ENCODE measurements at regions of chr19 and their contacts with region 1.

Region 1: DNA sequence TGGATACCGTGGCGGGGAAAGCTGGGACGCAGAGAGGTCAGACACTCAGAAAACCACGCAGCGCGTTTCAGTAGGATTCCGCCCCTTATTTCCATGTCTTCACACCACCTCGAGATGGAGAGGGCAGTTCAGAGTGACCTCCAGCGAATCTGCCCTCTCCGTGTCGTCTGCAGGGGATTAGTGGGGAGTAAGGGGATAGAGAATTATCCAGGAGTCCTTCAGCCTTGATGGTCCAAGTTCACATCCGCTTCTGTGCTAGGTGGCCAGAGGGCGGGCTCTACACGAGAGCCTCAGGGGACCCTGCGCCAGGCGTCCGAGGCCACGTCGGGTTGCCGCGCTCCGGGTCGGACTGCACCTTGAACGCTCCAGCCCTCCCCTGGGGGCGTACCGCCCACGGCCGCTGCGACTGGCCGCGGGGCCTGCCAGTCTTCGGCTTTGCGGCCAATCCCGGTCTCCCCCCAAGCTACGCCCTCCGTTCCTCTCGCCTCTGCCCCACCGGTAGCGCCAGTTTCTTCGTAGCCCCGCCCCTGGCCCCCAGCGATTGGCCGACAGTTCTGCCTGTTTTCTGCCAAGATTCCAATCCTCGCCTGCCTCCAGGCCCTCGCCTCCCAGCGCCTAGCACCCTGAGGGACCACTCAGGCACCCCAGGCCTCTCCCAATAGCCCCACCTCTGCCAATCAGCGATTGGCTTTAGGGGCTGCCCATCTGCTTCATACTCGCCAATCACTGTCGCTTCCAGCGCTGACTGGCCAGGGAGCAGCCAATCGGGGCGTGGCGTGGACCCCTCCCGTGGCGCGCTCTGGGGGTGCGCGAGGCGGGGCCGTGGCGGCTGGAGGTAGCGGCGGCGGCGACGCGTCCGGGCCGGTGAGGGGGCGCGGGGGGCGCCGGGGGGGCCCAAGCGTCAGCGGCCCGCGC is at the start of gene SLC25A42:
- DNase-seq: peak; percentile 99
- ATAC-seq: peak; percentile 97
- H3K4me3 ChIP-seq: peak within 1 kb of the TSS; percentile 64
- H3K27ac ChIP-seq: peak within 1 kb of the TSS; percentile 13; the same call in 1 of the 2 replicates
- H3K4me1 ChIP-seq: peaks cover 13% of the 10 kb centered on the region
- H3K27me3 ChIP-seq: no peaks in the 10 kb centered on the region
- CTCF ChIP-seq: no peak
- POLR2A ChIP-seq: no peak
- RAD21 ChIP-seq: no peak
- total RNA-seq, gene SLC25A42: 1.9 and 2.0 TPM in 2 replicates

Region 2: DNA sequence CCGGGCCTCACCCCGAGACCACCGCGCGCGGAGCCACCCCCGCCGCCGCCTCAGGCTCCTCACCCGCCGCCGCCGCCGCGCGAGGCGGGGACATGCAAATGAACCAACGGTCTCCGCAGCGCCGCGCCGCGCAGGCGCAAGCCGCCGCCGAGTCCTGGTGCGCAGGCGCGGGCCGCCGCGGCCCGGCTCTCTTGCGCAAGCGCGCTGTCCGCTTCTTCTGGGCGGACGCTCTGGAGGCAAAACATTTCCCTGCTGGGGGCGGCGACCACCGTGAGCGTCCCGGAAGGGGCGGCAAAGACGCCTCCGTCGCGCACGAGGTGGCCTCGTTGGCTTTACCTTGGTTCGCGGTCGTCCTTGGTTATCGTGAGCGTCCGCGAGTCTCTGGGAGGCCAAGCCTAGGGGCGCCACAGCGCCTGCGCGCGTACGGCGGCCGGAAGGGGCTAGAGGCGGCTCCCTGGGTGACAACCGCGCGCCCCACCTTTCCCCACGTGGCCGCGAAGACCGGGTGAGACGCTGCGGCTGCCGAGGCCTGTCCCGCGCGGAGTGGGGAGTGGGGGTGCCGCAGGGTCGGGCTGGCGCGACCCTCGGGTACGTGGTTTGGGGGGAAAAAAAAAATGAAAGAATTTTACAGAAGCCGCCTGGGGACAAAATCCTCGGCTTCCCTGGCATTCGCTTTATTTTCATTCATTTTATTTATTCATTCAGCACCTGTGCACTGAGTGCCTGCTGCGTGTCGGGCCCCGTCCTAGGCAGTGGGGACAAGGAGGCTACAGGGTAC is 29.8 kb before region 1 on chr19 and contains the starts of genes ARMC6 and SUGP2:
- CTCF ChIA-PET with region 1: no interaction called
- POLR2A ChIA-PET with region 1: no interaction called
- dilution Hi-C with region 1: no loop called
- in situ Hi-C with region 1: no loop called
- intact Hi-C with region 1: no loop called
- DNase-seq: peak; percentile 84
- ATAC-seq: peak; percentile 81
- H3K4me3 ChIP-seq: peak within 1 kb of the TSS; percentile 70
- H3K27ac ChIP-seq: peak within 1 kb of the TSS; percentile 94
- H3K4me1 ChIP-seq: peaks cover 6% of the 10 kb centered on the region
- H3K27me3 ChIP-seq: no peaks in the 10 kb centered on the region
- CTCF ChIP-seq: no peak
- POLR2A ChIP-seq: peak; percentile 81
- RAD21 ChIP-seq: no peak
- total RNA-seq, gene ARMC6: 46.7 and 52.7 TPM in 2 replicates
- total RNA-seq, gene SUGP2: 23.3 and 25.8 TPM in 2 replicates

Region 3: GRCh38 chr19:19138169-19138981 is 74.9 kb after region 1 on chr19 and contains the start of gene TMEM161A:
- CTCF ChIA-PET with region 1: no interaction called
- POLR2A ChIA-PET with region 1: no interaction called
- dilution Hi-C with region 1: no loop called
- in situ Hi-C with region 1: no loop called
- intact Hi-C with region 1: loop called (anchors 2 kb)
- DNase-seq: peak; percentile 99
- ATAC-seq: peak; percentile 99
- H3K4me3 ChIP-seq: peak within 1 kb of the TSS; percentile 94
- H3K27ac ChIP-seq: peak within 1 kb of the TSS; percentile 78
- H3K4me1 ChIP-seq: peaks cover 6% of the 10 kb centered on the region; the same call in 1 of the 2 replicates
- H3K27me3 ChIP-seq: no peaks in the 10 kb centered on the region
- CTCF ChIP-seq: no peak
- POLR2A ChIP-seq: peak; percentile 57; the same call in 1 of the 2 replicates
- RAD21 ChIP-seq: no peak
- total RNA-seq, gene TMEM161A: 11.1 TPM in 2 replicates

Region 4: GRCh38 chr19:19170053-19170872 is 106.8 kb after region 1 on chr19 and contains the start of gene MEF2B:
- CTCF ChIA-PET with region 1: no interaction called
- POLR2A ChIA-PET with region 1: no interaction called
- dilution Hi-C with region 1: no loop called
- in situ Hi-C with region 1: no loop called
- intact Hi-C with region 1: loop called (anchors 10 kb)
- DNase-seq: peak; percentile 30
- ATAC-seq: peak; percentile 75
- H3K4me3 ChIP-seq: no peak within 1 kb of the TSS
- H3K27ac ChIP-seq: no peak within 1 kb of the TSS
- H3K4me1 ChIP-seq: peaks cover 24% of the 10 kb centered on the region
- H3K27me3 ChIP-seq: no peaks in the 10 kb centered on the region
- CTCF ChIP-seq: no peak
- POLR2A ChIP-seq: no peak
- RAD21 ChIP-seq: no peak
- total RNA-seq, gene MEF2B: under 0.01 and 0.18 TPM in 2 replicates

Region 5: DNA sequence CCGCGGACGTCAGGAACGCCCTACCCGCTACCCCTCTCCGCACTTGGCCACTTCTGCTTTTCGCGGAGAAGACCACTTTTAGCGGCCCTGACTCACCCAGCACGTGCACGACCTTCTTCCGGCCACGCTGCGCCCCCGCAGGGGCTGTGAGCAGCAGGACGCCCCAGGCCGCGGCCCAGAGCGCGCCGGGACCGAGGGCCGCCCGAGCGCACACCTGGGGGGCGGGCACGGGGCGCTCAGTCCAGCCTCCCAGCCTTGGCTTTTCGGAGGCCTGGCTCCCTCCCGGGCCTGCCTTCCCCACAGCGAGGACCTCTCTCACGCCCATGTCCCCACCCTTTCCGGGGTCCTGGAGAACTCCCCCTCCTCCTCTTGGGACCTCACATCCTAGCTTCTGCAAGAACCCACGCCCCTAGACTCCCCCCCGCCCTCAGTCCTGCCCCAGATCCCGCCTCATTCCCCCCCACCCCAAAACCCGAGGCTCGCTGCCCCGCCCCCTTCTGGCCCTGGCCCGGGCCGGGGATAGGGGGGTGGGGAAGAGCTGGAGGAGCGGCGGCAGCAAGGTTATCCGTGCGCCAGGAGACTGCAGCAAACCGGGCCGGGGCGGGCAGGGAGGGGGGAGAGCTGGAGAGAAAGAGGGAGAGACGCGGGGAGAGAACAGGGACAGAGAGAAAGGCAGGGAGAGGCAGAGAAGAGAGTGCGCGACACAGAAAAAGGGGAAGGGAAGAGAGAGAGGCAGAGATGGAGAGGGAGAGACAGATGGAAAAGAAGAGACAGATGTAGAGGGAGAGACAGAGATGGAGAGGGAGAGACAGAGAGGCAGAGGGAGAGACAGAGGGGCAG is 198.1 kb after region 1 on chr19:
- CTCF ChIA-PET with region 1: no interaction called
- POLR2A ChIA-PET with region 1: no interaction called
- dilution Hi-C with region 1: no loop called
- in situ Hi-C with region 1: no loop called
- intact Hi-C with region 1: no loop called
- DNase-seq: no peak
- ATAC-seq: peak; percentile 38
- H3K4me3 ChIP-seq: peak overlapping the region; percentile 26; the same call in 1 of the 2 replicates
- H3K27ac ChIP-seq: no peak overlapping the region
- H3K4me1 ChIP-seq: 0 out of 2 replicates have a peak, but pooled peaks cover 2% of the 10 kb centered on the region
- H3K27me3 ChIP-seq: peaks cover 42% of the 10 kb centered on the region
- CTCF ChIP-seq: no peak
- POLR2A ChIP-seq: no peak
- RAD21 ChIP-seq: no peak